Prostate gland (tissue), 2 donors: ENCODE measurements at regions of chr18 and their contacts with region 1.

Region 1: GRCh38 chr18:76565238-76566180 is 70.5 kb upstream of the ZNF516 start:
- DNase-seq: peak; percentile 76
- H3K4me3 ChIP-seq: peak overlapping the region; percentile 15 to 25
- H3K27ac ChIP-seq: peak overlapping the region; percentile 68 to 75
- H3K4me1 ChIP-seq: peaks cover 7% of the 10 kb centered on the region
- H3K27me3 ChIP-seq: no peaks in the 10 kb centered on the region
- CTCF ChIP-seq: no peak
- POLR2A ChIP-seq: no peak

Region 2: GRCh38 chr18:75752740-75753263 is 812.7 kb before region 1 on chr18:
- intact Hi-C with region 1: no loop called
- DNase-seq: no peak
- H3K4me3 ChIP-seq: no peak overlapping the region
- H3K27ac ChIP-seq: no peak overlapping the region
- H3K4me1 ChIP-seq: no peaks in the 10 kb centered on the region
- H3K27me3 ChIP-seq: no peaks in the 10 kb centered on the region
- CTCF ChIP-seq: no peak
- POLR2A ChIP-seq: no peak

Region 3: GRCh38 chr18:76450452-76451395 is 114.8 kb before region 1 on chr18:
- intact Hi-C with region 1: no loop called
- DNase-seq: no peak
- H3K4me3 ChIP-seq: peak overlapping the region; percentile 41 to 46
- H3K27ac ChIP-seq: peak overlapping the region; percentile 69 to 84
- H3K4me1 ChIP-seq: peaks cover 7% of the 10 kb centered on the region
- H3K27me3 ChIP-seq: no peaks in the 10 kb centered on the region
- CTCF ChIP-seq: no peak
- POLR2A ChIP-seq: no peak

Region 4: GRCh38 chr18:76528477-76529432 is 36.8 kb before region 1 on chr18:
- intact Hi-C with region 1: loop called (anchors 5 kb)
- DNase-seq: peak; percentile 25
- H3K4me3 ChIP-seq: peak overlapping the region; percentile 25 to 32
- H3K27ac ChIP-seq: peak overlapping the region; percentile 73 to 74
- H3K4me1 ChIP-seq: no peaks in the 10 kb centered on the region
- H3K27me3 ChIP-seq: no peaks in the 10 kb centered on the region
- CTCF ChIP-seq: no peak
- POLR2A ChIP-seq: no peak

Region 5: GRCh38 chr18:76610933-76611749 is 45.6 kb after region 1 on chr18:
- intact Hi-C with region 1: loop called (anchors 5 kb)
- DNase-seq: peak; percentile 48
- H3K4me3 ChIP-seq: peak overlapping the region in 1 of 2 donors; percentile 14
- H3K27ac ChIP-seq: peak overlapping the region; percentile 5 to 54
- H3K4me1 ChIP-seq: no peaks in the 10 kb centered on the region
- H3K27me3 ChIP-seq: no peaks in the 10 kb centered on the region
- CTCF ChIP-seq: no peak
- POLR2A ChIP-seq: no peak